GM10248 (cell line): ENCODE measurements at regions of chr12 and their contacts with region 1.

Region 1: GRCh38 chr12:62181481-62181880 is 78.7 kb upstream of the USP15 start:
- DNase-seq: no peak
- CTCF ChIP-seq: no peak

Region 2: DNA sequence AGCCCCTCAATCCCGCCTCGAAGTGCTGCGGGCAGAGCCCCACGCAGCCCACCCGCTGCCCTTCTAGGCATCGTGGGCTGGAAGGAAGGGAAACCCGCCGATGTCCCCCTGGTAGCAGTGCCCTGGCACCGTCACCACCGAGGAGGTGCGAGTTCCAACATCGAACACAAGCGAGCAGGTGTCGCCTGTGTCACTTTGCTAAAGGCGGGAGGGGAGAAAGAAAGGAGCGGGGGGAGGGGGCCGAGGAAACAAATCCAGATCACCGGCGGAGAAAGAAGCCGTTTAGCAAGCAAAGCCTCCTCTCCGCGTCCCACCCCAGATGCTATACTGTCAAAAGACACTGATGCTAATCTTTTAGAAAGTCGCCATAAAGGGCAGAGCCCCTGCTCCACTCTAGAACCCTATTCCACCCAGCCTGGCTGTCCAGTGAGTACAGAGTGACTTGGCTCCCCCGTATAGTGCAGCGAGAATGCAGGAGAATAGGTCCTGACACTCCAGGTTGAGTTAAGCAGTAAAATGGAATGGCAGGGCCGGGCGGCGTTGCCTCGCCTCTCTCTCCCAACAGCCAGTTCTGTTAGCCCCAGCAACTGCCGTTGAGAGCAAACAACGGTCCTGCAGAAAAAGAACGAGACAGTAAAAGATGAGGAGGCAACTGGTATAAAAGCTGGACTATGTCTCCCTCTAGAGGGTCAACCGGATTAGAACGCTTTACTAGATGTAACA is 10.9 kb after region 1 on chr12:
- CTCF ChIA-PET with region 1: interaction called, 24 read pairs
- POLR2A ChIA-PET with region 1: no interaction called
- DNase-seq: peak; percentile 74
- CTCF ChIP-seq: peak; percentile 73

Region 3: GRCh38 chr12:62248873-62249272 is 67.4 kb after region 1 on chr12:
- CTCF ChIA-PET with region 1: no interaction called
- POLR2A ChIA-PET with region 1: no interaction called
- DNase-seq: no peak
- CTCF ChIP-seq: no peak